Endothelial cell of umbilical vein (primary cell): ENCODE measurements at regions of chr12 and their contacts with region 1.

Region 1: DNA sequence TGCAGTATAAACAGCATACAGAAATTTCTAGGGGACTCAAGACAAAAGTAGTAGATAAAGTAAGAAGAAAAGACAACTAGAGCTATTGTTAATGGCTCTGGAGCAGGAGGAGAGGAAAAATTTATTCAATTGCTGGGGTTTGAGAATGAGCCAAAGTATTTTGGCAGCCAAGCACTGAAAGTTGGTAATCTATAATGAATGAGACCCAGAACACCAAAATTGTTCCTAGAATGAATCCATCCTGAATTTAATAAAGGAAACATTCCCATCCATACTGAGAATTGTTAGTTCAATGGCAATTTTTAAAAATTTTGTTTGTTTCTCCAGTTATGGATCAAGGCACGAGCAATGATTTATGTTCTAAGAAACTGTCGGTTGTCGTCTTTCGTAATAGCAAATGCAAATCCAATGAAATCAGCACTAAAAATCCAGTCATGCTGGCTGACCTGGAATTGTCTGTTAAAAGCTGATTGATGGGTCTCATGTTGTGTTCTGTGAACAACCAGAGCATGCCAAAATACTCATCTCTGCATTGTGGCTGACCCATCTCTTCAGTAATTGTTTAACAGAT is 170.9 kb upstream of the LMNTD1 start:
- DNase-seq: no peak
- H3K4me3 ChIP-seq: no peak overlapping the region
- H3K27ac ChIP-seq: no peak overlapping the region
- H3K4me1 ChIP-seq: peaks cover 12% of the 10 kb centered on the region
- H3K27me3 ChIP-seq: no peaks in the 10 kb centered on the region
- CTCF ChIP-seq: no peak
- POLR2A ChIP-seq: no peak

Region 2: DNA sequence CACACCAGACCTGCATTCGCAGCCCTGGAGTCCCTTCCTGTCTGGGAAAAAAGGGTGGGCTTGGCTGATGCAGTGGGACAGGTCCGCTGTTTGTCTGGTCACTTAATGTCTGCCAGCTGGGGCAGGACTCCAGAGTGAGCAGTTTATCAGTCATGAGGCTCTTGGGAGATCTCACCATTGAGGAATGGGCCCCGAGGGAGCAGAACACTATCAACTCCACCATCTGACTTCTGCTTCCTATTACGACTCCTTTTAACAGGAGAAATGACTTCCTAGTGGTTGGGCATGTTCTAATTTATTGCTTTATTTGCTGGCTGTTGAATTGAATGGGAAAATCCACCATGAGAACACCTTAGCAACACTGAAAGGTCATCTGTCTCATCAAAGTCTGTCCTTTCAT is 52.0 kb after region 1 on chr12:
- CTCF ChIA-PET with region 1: no interaction called
- POLR2A ChIA-PET with region 1: no interaction called
- dilution Hi-C with region 1: no loop called
- intact Hi-C with region 1: loop called (anchors 5 kb)
- DNase-seq: peak; percentile 91
- H3K4me3 ChIP-seq: no peak overlapping the region
- H3K27ac ChIP-seq: peak overlapping the region; percentile 43
- H3K4me1 ChIP-seq: peaks cover 10% of the 10 kb centered on the region
- H3K27me3 ChIP-seq: no peaks in the 10 kb centered on the region
- CTCF ChIP-seq: no peak
- POLR2A ChIP-seq: no peak